ENCODE measurements at regions of chr4 and their contacts with region 1.

Region 1: DNA sequence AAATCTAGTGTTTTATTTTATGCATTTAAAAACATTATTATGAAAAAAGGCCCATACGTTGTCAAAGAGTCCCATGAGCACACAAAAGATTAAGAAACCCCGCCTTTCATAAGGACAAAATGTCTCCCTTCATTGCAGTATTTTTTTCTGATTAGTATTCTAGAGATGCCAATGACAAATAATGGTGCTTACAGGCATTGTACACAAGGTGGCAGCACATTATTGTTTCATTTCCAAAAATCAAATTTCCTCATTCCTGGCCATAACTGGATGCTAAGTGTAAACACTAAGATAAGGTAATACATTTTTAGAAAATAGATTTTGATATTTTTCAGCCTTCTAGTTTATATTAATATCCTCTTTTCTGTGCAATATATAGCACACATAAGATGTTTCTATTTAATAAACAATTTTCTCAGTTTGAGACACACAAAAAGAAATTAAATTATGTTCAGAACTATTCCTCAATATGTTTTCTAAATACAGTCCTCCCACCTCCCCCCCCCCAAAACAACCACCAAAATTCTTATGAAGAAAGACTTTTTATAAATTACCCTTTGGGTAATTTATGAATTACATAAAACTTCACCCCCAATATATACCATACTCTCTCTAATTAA is 47.7 kb downstream of the TIGD2 start:
- DNase-seq: peak; percentile 57
- ATAC-seq: peak; percentile 69
- H3K4me3 ChIP-seq: no peak overlapping the region
- H3K4me3 Mint-ChIP-seq: no peak overlapping the region
- H3K27ac ChIP-seq: no peak overlapping the region
- H3K27ac Mint-ChIP-seq: no peak overlapping the region
- H3K4me1 ChIP-seq: no peaks in the 10 kb centered on the region
- H3K4me1 Mint-ChIP-seq: no peaks in the 10 kb centered on the region
- H3K27me3 ChIP-seq: no peaks in the 10 kb centered on the region
- H3K27me3 Mint-ChIP-seq: peaks cover 6% of the 10 kb centered on the region
- CTCF ChIP-seq: peak; percentile 88

Region 2: GRCh38 chr4:89434364-89434988 is 275.5 kb after region 1 on chr4:
- CTCF ChIA-PET with region 1: interaction called, 3 read pairs
- POLR2A ChIA-PET with region 1: no interaction called
- intact Hi-C with region 1: loop called (anchors 1 kb)
- DNase-seq: peak; percentile 52
- ATAC-seq: peak; percentile 41
- H3K4me3 ChIP-seq: no peak overlapping the region
- H3K4me3 Mint-ChIP-seq: no peak overlapping the region
- H3K27ac ChIP-seq: no peak overlapping the region
- H3K27ac Mint-ChIP-seq: no peak overlapping the region
- H3K4me1 ChIP-seq: peaks cover 0 to 4% of the 10 kb centered on the region in 2 donors
- H3K4me1 Mint-ChIP-seq: peaks cover 7% of the 10 kb centered on the region
- H3K27me3 ChIP-seq: no peaks in the 10 kb centered on the region
- H3K27me3 Mint-ChIP-seq: peaks cover 9% of the 10 kb centered on the region
- CTCF ChIP-seq: peak; percentile 71

Region 3: GRCh38 chr4:89898304-89898716 is 739.3 kb after region 1 on chr4:
- CTCF ChIA-PET with region 1: no interaction called
- POLR2A ChIA-PET with region 1: no interaction called
- intact Hi-C with region 1: loop called (anchors 1 kb)
- DNase-seq: peak; percentile 5
- ATAC-seq: peak; percentile 43
- H3K4me3 ChIP-seq: no peak overlapping the region
- H3K4me3 Mint-ChIP-seq: no peak overlapping the region
- H3K27ac ChIP-seq: no peak overlapping the region
- H3K27ac Mint-ChIP-seq: no peak overlapping the region
- H3K4me1 ChIP-seq: peaks cover 13 to 32% of the 10 kb centered on the region in 2 donors
- H3K4me1 Mint-ChIP-seq: peaks cover 16% of the 10 kb centered on the region
- H3K27me3 ChIP-seq: peaks cover 0 to 20% (median 6%) of the 10 kb centered on the region in 4 experiments
- H3K27me3 Mint-ChIP-seq: peaks cover 8% of the 10 kb centered on the region
- CTCF ChIP-seq: no peak

Measured in B cell (primary cell).